ENCODE measurements at regions of chr1 and their contacts with region 1.

Region 1: GRCh38 chr1:43358746-43359693 is at the start of gene CDC20:
- DNase-seq: peak; percentile 99
- ATAC-seq: peak; percentile 98 to 99
- H3K4me3 ChIP-seq: peak within 1 kb of the TSS; percentile 83
- H3K27ac ChIP-seq: peak within 1 kb of the TSS; percentile 97
- H3K4me1 ChIP-seq: peaks cover 14% of the 10 kb centered on the region
- H3K27me3 ChIP-seq: no peaks in the 10 kb centered on the region
- CTCF ChIP-seq: no peak
- total RNA-seq, gene CDC20: 2.4 TPM

Region 2: GRCh38 chr1:43238085-43238484 is 120.9 kb before region 1 on chr1:
- intact Hi-C with region 1: loop called (anchors 10 kb)
- DNase-seq: peak; percentile 66
- ATAC-seq: peak; percentile 83 to 90
- H3K4me3 ChIP-seq: no peak overlapping the region
- H3K27ac ChIP-seq: no peak overlapping the region
- H3K4me1 ChIP-seq: peaks cover 16% of the 10 kb centered on the region
- H3K27me3 ChIP-seq: no peaks in the 10 kb centered on the region
- CTCF ChIP-seq: peak; percentile 74